ENCODE measurements at regions of chr9 and their contacts with region 1.

Region 1: GRCh38 chr9:20526500-20527319 is 95.6 kb downstream of the MLLT3 start:
- DNase-seq: peak; percentile 4
- H3K4me3 ChIP-seq: no peak overlapping the region
- H3K27ac ChIP-seq: no peak overlapping the region
- H3K27me3 ChIP-seq: no peaks in the 10 kb centered on the region
- CTCF ChIP-seq: peak; percentile 42

Region 2: GRCh38 chr9:20512106-20512505 is 14.6 kb before region 1 on chr9:
- CTCF ChIA-PET with region 1: no interaction called
- POLR2A ChIA-PET with region 1: interaction called, 13 read pairs
- DNase-seq: peak; percentile 24
- H3K4me3 ChIP-seq: no peak overlapping the region
- H3K27ac ChIP-seq: no peak overlapping the region
- H3K27me3 ChIP-seq: no peaks in the 10 kb centered on the region
- CTCF ChIP-seq: no peak

Region 3: DNA sequence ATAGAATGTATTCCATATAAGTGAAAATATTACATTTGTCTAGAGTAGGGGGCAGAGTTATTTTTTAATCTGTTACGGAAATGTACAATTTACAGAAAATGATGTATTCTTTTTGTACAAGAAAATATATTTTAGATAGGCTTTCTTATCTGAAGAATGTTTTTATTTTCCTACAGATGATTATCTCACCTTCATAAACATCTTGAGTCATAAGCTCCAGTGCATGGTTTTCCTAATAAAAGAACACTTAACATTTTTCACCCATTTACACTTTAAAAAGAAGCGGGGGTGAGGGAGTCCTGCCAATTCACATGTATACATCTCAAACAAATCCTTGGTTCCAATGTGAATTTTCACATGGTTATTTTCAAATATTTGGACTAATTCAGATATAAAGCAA is 10.6 kb after region 1 on chr9:
- CTCF ChIA-PET with region 1: interaction called, 10 read pairs
- POLR2A ChIA-PET with region 1: interaction called, 3 read pairs
- DNase-seq: no peak
- H3K4me3 ChIP-seq: no peak overlapping the region
- H3K27ac ChIP-seq: no peak overlapping the region
- H3K27me3 ChIP-seq: no peaks in the 10 kb centered on the region
- CTCF ChIP-seq: no peak

Region 4: GRCh38 chr9:20562051-20562450 is 35.3 kb after region 1 on chr9:
- CTCF ChIA-PET with region 1: interaction called, 13 read pairs
- POLR2A ChIA-PET with region 1: no interaction called
- DNase-seq: no peak
- H3K4me3 ChIP-seq: no peak overlapping the region
- H3K27ac ChIP-seq: no peak overlapping the region
- H3K27me3 ChIP-seq: no peaks in the 10 kb centered on the region
- CTCF ChIP-seq: no peak

Measured in AG04450 (cell line).